Ascending aorta (tissue), 2 donors: ENCODE measurements at regions of chr20 and their contacts with region 1.

Region 1: DNA sequence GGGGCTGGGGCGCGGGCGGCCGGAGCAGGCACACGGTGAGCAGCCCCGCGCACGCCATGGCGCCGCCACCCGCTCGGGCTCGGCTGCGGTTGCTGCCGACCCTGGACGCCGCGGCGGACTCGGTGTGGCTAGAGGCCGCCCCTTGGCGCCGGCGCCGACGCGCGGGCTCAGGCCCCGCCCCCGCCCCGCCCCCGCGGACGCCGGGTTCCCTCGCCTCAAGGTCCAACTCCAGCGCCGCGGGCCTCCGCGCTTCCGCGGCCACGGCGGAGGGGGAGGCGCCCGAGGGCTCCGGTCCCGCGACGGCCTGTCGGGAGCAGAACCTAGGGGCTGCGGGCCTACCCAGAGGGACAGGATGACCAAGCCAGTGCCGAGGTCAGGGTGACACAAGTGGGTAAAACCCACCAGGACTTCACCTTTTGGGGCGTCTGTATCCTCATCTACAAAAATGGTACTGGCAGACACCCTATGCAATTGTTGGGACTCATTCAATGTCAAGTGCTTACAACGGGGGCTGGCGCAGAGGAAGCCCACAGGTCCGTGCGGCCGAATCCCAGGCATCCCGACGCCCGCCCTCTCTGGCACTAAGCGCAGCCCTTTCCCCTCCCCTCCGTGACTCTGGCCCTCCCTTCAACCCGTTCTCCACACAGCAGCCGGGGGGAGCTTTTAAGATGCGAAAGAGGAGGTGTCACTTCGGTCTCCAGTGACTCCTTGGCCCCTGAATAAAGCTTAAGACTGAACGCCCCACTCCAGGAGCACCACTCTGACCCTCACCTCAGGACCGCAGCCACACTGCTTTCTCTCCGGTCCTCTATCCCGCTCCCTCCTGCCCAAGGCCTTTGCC is at the start of gene NECAB3:
- DNase-seq: peak in 1 of 2 donors; percentile 92
- H3K4me3 ChIP-seq: peak within 1 kb of the TSS; percentile 67 to 84
- H3K27ac ChIP-seq: peak within 1 kb of the TSS; percentile 96 to 97
- H3K4me1 ChIP-seq: peaks cover 9 to 49% of the 10 kb centered on the region in 2 donors
- H3K27me3 ChIP-seq: no peaks in the 10 kb centered on the region
- CTCF ChIP-seq: no peak
- total RNA-seq, gene NECAB3: 21.3 TPM

Region 2: GRCh38 chr20:33731693-33732165 is 57.2 kb after region 1 on chr20 and contains the start of gene ZNF341:
- intact Hi-C with region 1: loop called (anchors 2 kb)
- DNase-seq: peak; percentile 29 to 92
- H3K4me3 ChIP-seq: peak within 1 kb of the TSS; percentile 73 to 81
- H3K27ac ChIP-seq: peak within 1 kb of the TSS; percentile 74 to 84
- H3K4me1 ChIP-seq: peaks cover 0 to 9% of the 10 kb centered on the region in 2 donors
- H3K27me3 ChIP-seq: no peaks in the 10 kb centered on the region
- CTCF ChIP-seq: peak; percentile 91
- total RNA-seq, gene ZNF341: 4.5 TPM

Region 3: GRCh38 chr20:34111702-34112599 is 437.4 kb after region 1 on chr20 and contains the start of gene EIF2S2:
- intact Hi-C with region 1: loop called (anchors 5 kb)
- DNase-seq: peak; percentile 87 to 97
- H3K4me3 ChIP-seq: peak within 1 kb of the TSS; percentile 79 to 95
- H3K27ac ChIP-seq: peak within 1 kb of the TSS; percentile 94 to 99
- H3K4me1 ChIP-seq: peaks cover 0 to 23% of the 10 kb centered on the region in 2 donors
- H3K27me3 ChIP-seq: no peaks in the 10 kb centered on the region
- CTCF ChIP-seq: no peak
- total RNA-seq, gene EIF2S2: 19.3 TPM